ENCODE measurements at regions of chr6 and their contacts with region 1.

Region 1: GRCh38 chr6:156699017-156699421 is 78.2 kb upstream of the ARID1B start:
- DNase-seq: no peak
- H3K4me3 ChIP-seq: peak overlapping the region; percentile 43
- H3K27ac ChIP-seq: peak overlapping the region; percentile 98
- H3K4me1 ChIP-seq: peaks cover 87% of the 10 kb centered on the region
- CTCF ChIP-seq: no peak

Region 2: GRCh38 chr6:155894758-155895157 is 804.3 kb before region 1 on chr6:
- CTCF ChIA-PET with region 1: no interaction called
- POLR2A ChIA-PET with region 1: no interaction called
- intact Hi-C with region 1: no loop called
- DNase-seq: no peak
- H3K4me3 ChIP-seq: no peak overlapping the region
- H3K27ac ChIP-seq: no peak overlapping the region
- H3K4me1 ChIP-seq: no peaks in the 10 kb centered on the region
- CTCF ChIP-seq: no peak

Region 3: DNA sequence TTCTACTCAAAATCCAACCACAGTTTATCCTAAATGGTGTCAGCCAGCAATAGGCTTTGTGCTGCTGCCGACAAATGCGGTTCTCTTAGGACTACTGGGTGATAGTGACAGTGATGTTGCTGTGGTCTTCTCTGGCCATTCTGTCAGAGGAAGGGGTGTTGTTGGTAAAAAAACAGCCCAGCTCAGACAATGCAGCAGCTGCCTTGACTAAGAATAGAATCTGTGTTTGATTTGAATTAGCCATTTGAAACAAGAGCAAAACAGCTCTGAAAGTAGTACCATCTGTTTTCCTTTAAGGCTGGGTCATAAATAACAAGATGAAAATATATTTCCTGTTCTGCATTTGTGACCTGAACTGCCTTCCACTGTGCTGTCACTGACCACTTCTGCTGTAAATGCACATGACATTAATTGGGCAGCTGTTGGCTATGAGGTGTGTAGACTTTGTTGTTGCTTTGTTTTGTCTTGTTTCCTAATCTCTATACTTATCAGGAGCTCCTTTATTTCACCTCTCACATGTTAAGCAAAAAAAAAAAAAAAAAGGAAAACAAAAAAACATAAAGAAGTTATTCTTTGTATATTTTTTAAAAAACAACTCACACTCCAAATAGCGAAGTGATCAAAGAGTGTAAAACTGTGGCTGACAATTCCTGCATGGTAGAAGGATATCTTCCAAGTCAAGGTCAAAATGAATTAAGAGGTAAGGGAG is 419.6 kb before region 1 on chr6:
- CTCF ChIA-PET with region 1: no interaction called
- POLR2A ChIA-PET with region 1: interaction called, 3 read pairs
- intact Hi-C with region 1: loop called (anchors 5 kb)
- DNase-seq: peak; percentile 98
- H3K4me3 ChIP-seq: peak overlapping the region; percentile 61
- H3K27ac ChIP-seq: peak overlapping the region; percentile 96
- H3K4me1 ChIP-seq: peaks cover 61% of the 10 kb centered on the region
- CTCF ChIP-seq: no peak

Region 4: GRCh38 chr6:156634951-156635371 is 64.1 kb before region 1 on chr6:
- CTCF ChIA-PET with region 1: no interaction called
- POLR2A ChIA-PET with region 1: interaction called, 4 read pairs
- intact Hi-C with region 1: loop called (anchors 2 kb)
- DNase-seq: peak; percentile 25
- H3K4me3 ChIP-seq: no peak overlapping the region
- H3K27ac ChIP-seq: peak overlapping the region; percentile 90
- H3K4me1 ChIP-seq: peaks cover 51% of the 10 kb centered on the region
- CTCF ChIP-seq: no peak

Region 5: GRCh38 chr6:156719720-156720563 is 20.9 kb after region 1 on chr6:
- CTCF ChIA-PET with region 1: no interaction called
- POLR2A ChIA-PET with region 1: interaction called, 10 read pairs
- intact Hi-C with region 1: no loop called
- DNase-seq: peak; percentile 64
- H3K4me3 ChIP-seq: peak overlapping the region; percentile 42
- H3K27ac ChIP-seq: peak overlapping the region; percentile 45
- H3K4me1 ChIP-seq: peaks cover 28% of the 10 kb centered on the region
- CTCF ChIP-seq: no peak

Region 6: GRCh38 chr6:157021344-157021992 is 322.4 kb after region 1 on chr6:
- CTCF ChIA-PET with region 1: no interaction called
- POLR2A ChIA-PET with region 1: interaction called, 3 read pairs
- intact Hi-C with region 1: loop called (anchors 2 kb)
- DNase-seq: peak; percentile 93
- H3K4me3 ChIP-seq: peak overlapping the region; percentile 73
- H3K27ac ChIP-seq: peak overlapping the region; percentile 89
- H3K4me1 ChIP-seq: peaks cover 38% of the 10 kb centered on the region
- CTCF ChIP-seq: peak; percentile 38